Activated CD4-positive, alpha-beta T cell treated with anti-CD3 and anti-CD28 coated beads for 36 hours (primary cell): ENCODE measurements at regions of chr22 and their contacts with region 1.

Region 1: GRCh38 chr22:31290494-31291471 is 1.5 kb downstream of the PIK3IP1 start:
- DNase-seq: peak; percentile 97
- ATAC-seq: peak; percentile 78
- H3K4me3 Mint-ChIP-seq: peak overlapping the region; percentile 90
- H3K27ac Mint-ChIP-seq: peak overlapping the region; percentile 97
- H3K4me1 Mint-ChIP-seq: peaks cover 71% of the 10 kb centered on the region
- H3K27me3 Mint-ChIP-seq: no peaks in the 10 kb centered on the region

Region 2: DNA sequence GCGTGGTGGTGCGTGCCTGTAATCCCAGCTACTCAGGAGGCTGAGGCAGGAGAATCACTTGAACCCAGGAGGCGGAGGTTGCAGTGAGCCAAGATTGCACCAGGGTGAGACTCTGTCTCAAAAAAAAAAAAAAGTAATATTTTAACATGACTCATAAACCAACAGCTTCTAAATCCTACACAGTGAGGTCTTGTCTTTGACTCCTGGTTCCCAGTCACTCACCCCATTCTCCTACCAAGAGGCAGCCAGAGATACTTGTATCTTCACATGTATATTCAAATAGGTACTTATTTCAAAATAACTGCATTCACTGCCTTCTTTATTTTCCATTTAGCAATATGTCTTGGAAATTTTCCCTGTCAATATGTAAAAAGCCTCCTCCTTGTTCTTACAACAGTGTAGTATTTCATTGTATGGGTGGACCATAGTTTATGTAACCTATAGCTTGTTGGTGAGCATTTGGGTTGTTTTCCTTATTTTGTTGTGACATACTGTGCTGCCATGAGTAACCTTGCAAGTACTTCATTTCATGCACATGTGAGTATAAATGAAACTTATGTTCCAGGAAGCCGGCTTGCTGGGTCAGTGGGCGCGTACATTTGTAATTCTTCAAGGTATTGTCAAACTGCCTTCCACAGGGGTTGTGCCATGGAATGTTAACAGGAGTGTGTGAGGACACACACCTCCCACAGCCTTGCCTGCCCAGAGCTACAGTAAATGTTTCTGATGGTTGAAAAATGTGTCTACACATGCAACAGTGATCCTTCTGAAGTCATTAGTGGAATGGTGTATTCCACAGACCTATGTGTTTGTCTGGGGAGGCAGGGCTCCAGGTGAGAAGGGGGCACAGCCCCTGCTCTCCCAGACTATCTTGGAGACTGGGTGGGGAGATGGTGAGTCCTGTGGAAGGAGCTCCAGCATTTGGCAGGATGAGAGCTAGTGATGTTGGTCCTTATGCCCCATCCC is 548.2 kb before region 1 on chr22:
- CTCF ChIA-PET with region 1: no interaction called
- POLR2A ChIA-PET with region 1: no interaction called
- intact Hi-C with region 1: loop called in 1 of 2 experiments (anchors 5 kb)
- DNase-seq: peak; percentile 69
- ATAC-seq: peak; percentile 61
- H3K4me3 Mint-ChIP-seq: peak overlapping the region; percentile 6
- H3K27ac Mint-ChIP-seq: peak overlapping the region; percentile 82
- H3K4me1 Mint-ChIP-seq: peaks cover 64% of the 10 kb centered on the region
- H3K27me3 Mint-ChIP-seq: peaks cover 7% of the 10 kb centered on the region

Region 3: DNA sequence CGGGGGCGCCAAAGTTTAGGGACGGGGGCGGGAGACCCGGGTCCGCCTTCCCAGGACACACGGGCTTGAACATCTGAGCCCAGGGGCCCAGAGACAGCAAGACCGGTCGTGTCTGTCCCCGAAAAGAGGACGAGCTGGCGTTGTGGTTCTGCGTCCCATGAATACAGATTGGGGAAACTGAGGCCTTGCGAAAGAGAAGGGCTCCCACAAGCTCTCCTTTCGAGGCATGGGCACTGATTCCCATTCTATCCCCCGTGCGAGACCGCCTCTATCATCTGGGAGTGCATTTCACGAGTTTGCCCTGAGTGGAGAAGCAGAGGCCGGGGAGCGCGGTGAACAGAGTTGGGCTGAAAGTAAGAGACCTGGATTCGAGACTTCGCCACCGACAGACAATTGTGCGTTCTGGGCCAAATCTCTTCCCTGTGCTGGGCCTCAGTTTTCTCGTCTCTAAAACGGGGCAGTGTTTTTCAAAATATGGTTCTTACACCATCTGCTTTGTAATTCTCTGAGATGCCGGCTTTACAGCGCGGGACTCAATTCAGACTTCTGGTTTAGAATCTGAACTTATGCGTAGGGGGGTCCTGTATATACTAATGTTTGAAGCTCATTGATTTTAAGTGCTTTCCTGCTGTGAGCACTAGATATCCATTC is 130.3 kb before region 1 on chr22:
- CTCF ChIA-PET with region 1: interaction called, 4 read pairs
- POLR2A ChIA-PET with region 1: no interaction called
- intact Hi-C with region 1: loop called (anchors 2 to 5 kb)
- DNase-seq: peak; percentile 47
- ATAC-seq: peak; percentile 45
- H3K4me3 Mint-ChIP-seq: peak overlapping the region; percentile 85
- H3K27ac Mint-ChIP-seq: peak overlapping the region; percentile 95
- H3K4me1 Mint-ChIP-seq: peaks cover 29% of the 10 kb centered on the region
- H3K27me3 Mint-ChIP-seq: no peaks in the 10 kb centered on the region

Region 4: GRCh38 chr22:31278622-31279326 is 12.0 kb before region 1 on chr22:
- CTCF ChIA-PET with region 1: interaction called, 24 read pairs
- POLR2A ChIA-PET with region 1: interaction called, 38 read pairs
- intact Hi-C with region 1: loop called in 1 of 2 experiments (anchors 1 kb)
- DNase-seq: peak; percentile 52
- ATAC-seq: peak; percentile 90
- H3K4me3 Mint-ChIP-seq: no peak overlapping the region
- H3K27ac Mint-ChIP-seq: peak overlapping the region; percentile 86
- H3K4me1 Mint-ChIP-seq: peaks cover 79% of the 10 kb centered on the region
- H3K27me3 Mint-ChIP-seq: no peaks in the 10 kb centered on the region

Region 5: DNA sequence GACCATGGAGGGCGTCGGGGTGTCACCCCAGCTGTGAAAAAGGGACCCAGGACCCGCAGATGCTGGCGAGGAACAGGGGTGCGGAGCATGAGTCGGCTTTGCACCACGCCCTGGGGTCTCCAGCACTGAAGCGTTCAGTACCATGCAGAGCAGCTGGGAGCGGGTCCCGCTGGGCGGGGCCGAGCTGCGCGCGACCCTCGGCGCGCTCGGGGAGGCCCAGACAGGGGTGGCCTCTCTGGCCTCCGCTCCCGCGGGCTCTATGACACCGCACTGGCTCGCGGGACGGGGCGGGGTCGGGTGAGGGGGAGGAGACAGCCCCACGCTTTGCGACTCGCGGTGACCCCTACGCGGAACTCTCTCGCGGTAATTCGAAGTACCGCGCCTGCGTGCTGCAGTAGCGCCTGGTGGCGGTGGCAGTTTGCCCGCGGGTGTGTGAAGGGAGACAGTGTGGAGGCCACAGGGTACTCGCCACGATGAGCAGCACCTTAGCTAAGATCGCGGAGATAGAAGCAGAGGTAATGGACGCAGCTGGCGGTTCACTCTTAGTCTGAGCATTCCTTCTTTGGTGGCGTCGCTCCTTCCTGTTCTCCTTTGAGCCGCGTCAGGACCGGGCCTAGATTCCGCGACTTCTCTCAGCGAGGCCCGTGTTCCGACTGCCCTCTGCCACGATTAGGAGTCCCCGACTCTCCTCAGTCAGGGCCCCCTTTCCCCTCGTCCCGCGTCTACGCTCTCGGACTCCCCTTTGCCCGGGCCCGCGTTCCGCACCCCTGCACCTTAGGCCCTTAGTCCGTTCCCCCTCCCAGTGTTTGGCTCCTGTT is 108.6 kb after region 1 on chr22 and contains the start of gene DRG1:
- CTCF ChIA-PET with region 1: no interaction called
- POLR2A ChIA-PET with region 1: no interaction called
- intact Hi-C with region 1: loop called (anchors 1 to 5 kb)
- DNase-seq: peak; percentile 99
- ATAC-seq: peak; percentile 98
- H3K4me3 Mint-ChIP-seq: peak within 1 kb of the TSS; percentile 99
- H3K27ac Mint-ChIP-seq: peak within 1 kb of the TSS; percentile 91
- H3K4me1 Mint-ChIP-seq: peaks cover 18% of the 10 kb centered on the region
- H3K27me3 Mint-ChIP-seq: peaks cover under 1% of the 10 kb centered on the region
- total RNA-seq, gene DRG1: 104 to 106 TPM

Region 6: GRCh38 chr22:31943976-31944699 is 653.4 kb after region 1 on chr22 and contains the start of gene YWHAH:
- CTCF ChIA-PET with region 1: no interaction called
- POLR2A ChIA-PET with region 1: no interaction called
- intact Hi-C with region 1: loop called in 1 of 2 experiments (anchors 2 kb)
- DNase-seq: peak; percentile 96
- ATAC-seq: peak; percentile 73
- H3K4me3 Mint-ChIP-seq: no peak within 1 kb of the TSS
- H3K27ac Mint-ChIP-seq: peak within 1 kb of the TSS; percentile 84
- H3K4me1 Mint-ChIP-seq: peaks cover 21% of the 10 kb centered on the region
- H3K27me3 Mint-ChIP-seq: no peaks in the 10 kb centered on the region
- total RNA-seq, gene YWHAH: 83.2 to 98.5 TPM